Heart right ventricle (tissue), 16 donors: ENCODE measurements at regions of chr5 and their contacts with region 1.

Region 1: DNA sequence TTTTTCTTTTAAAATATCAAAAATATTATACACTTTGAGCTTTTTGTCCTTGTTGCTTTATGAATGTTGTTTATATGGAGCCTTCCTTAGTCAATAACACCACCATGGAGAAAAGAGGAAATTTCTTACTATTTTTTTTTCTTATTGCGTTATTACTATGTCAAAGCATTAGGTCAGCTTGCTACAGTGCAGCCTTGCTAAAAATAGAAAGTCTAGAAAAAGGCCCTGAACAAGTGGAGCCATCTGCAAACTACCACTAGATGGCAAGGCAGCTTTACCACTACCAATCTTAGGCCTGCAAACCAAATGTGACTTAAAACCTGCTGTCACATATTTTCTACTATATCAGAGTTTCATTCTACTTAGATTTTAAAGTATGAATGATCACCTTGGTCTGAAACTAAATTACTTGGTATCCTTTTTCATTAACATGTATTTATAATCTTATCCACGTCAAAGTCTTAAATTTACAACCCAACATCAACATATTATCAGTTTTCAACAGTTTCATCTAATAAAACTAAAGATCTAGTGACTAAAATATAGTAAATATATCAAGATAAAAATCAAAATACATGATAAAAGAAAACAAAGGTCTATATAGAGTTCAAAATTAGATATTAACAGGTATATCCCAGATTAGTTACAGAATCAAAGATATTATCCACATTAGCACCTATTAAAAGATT is 113.1 kb upstream of the ACOT12 start:
- DNase-seq: peak in 1 of 2 donors; percentile 80
- ATAC-seq: peak; percentile 97 to 100 (median 98)
- H3K4me3 ChIP-seq: peak overlapping the region in 1 of 10 donors; percentile 9
- H3K27ac ChIP-seq: peak overlapping the region in 6 of 10 donors; percentile 45 to 74 (median 61)
- H3K4me1 ChIP-seq: peaks cover 0 to 27% (median 20%) of the 10 kb centered on the region in 9 donors
- H3K27me3 ChIP-seq: no peaks in the 10 kb centered on the region
- CTCF ChIP-seq: peak; percentile 82 to 97 (median 85)

Region 2: GRCh38 chr5:81225463-81225862 is 281.6 kb before region 1 on chr5:
- intact Hi-C with region 1: no loop called
- DNase-seq: no peak
- ATAC-seq: no peak
- H3K4me3 ChIP-seq: no peak overlapping the region
- H3K27ac ChIP-seq: no peak overlapping the region
- H3K4me1 ChIP-seq: no peaks in the 10 kb centered on the region
- H3K27me3 ChIP-seq: no peaks in the 10 kb centered on the region
- CTCF ChIP-seq: no peak

Region 3: DNA sequence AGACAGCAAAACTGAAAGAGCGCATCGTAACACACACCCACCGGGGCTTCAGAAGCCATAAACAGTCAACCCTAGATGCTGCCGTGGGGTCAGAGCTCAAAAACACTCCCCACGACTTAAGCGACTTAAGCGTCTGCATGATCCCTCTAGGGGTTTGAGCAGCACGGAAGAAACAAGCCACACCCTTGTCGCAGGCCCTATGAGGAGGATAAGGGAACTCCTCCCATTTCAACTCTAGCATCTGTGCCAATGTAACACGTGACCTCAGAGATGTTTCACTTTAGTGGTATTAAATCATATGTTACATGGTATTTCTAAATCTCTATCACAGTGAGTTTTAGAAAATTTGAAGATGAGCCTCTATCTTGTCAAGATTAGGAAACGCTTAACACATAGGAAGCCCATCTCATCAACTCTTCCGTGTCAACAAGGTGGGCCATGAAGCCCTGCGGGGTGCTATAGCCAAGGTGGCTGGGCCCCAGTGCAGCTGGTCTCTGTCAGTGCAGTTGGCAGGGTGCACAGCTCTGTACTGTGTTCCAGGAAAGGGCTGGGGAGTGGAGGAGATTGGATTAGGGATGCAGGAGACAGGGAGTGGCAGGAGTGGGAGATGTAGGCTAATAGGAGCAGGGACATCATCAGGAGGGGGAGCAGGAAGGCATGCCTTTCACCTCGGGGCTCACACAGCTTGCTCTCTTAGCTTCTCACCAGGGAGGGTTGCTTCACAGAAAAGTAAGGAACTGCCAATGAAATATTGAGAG is 172.6 kb before region 1 on chr5:
- intact Hi-C with region 1: no loop called
- DNase-seq: no peak
- ATAC-seq: peak in 2 of 8 donors; percentile 37 to 53
- H3K4me3 ChIP-seq: peak overlapping the region in 6 of 10 donors; percentile 15 to 41 (median 34)
- H3K27ac ChIP-seq: no peak overlapping the region
- H3K4me1 ChIP-seq: no peaks in the 10 kb centered on the region
- H3K27me3 ChIP-seq: no peaks in the 10 kb centered on the region
- CTCF ChIP-seq: no peak

Region 4: GRCh38 chr5:81971712-81972495 is 464.9 kb after region 1 on chr5 and contains the start of gene ATG10:
- intact Hi-C with region 1: loop called in 4 of 10 experiments (anchors 2 to 10 kb)
- DNase-seq: peak; percentile 91 to 94
- ATAC-seq: peak; percentile 99 to 100 (median 99)
- H3K4me3 ChIP-seq: peak within 1 kb of the TSS; percentile 37 to 86 (median 68)
- H3K27ac ChIP-seq: peak within 1 kb of the TSS; percentile 97 to 100 (median 99)
- H3K4me1 ChIP-seq: peaks cover 0 to 20% (median 0%) of the 10 kb centered on the region in 9 donors
- H3K27me3 ChIP-seq: no peaks in the 10 kb centered on the region
- CTCF ChIP-seq: no peak
- total RNA-seq, gene ATG10: 4.6 to 8.0 (median 7.2) TPM